GM18951 (cell line): ENCODE measurements at regions of chr20 and their contacts with region 1.

Region 1: DNA sequence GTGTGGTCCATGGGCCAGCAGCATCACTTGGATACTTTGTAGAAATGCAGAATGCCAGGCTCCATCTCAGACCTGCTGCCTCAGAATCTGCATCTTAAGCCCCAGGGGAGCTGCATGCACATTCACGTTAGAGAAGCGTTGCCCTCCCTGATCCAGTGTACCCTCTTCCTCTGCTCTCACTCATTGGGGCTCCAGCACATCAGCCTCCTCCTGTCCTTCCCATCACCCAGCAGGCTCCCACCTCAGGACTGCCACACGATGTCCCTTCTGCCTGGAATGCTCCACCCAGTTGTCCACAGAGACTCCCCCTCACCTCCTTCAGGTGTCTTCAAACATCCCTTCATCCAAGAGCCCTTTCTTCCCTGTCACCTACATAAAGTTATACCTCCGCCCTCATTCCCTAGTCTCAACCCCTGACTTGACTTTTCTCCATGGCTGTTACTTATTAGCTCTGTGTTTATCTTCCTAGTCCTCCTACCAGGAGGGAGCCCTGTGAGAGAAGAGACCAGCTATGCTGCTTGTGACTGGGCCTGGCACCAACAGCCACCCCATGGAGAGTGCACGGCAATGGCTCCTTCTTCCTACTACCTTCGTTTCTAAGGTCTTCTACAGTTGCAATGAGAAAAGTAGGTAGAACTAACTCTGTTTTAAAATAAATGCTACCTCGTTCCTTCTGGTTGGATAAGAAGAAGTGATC is 3.3 kb upstream of the ACSS1 start:
- POLR2A ChIP-seq: no peak

Region 2: DNA sequence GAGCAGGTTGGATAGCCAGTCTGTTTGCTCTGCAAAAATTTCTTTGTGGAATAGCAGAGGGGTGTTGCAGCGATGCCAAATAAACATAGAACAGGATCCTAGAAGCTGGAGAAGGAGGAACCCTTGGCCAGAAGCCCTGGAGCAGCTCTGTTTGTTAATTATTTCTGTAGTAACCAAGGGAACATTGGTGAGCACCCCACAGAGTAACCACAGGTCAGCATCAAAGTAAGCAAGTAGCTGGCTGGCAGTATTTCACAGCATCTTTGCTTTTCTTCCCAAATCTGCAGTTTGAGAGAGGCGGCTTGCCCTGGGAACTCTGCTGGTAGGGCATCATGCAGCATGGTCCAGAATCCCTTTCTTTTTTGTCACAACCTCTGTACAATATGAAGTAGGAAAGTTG is 56.0 kb before region 1 on chr20:
- in situ Hi-C with region 1: loop called (anchors 5 kb)
- POLR2A ChIP-seq: no peak